ENCODE measurements at regions of chr4 and their contacts with region 1.

Region 1: GRCh38 chr4:145320294-145320693 is 139.9 kb upstream of the OTUD4 start:
- DNase-seq: no peak

Region 2: DNA sequence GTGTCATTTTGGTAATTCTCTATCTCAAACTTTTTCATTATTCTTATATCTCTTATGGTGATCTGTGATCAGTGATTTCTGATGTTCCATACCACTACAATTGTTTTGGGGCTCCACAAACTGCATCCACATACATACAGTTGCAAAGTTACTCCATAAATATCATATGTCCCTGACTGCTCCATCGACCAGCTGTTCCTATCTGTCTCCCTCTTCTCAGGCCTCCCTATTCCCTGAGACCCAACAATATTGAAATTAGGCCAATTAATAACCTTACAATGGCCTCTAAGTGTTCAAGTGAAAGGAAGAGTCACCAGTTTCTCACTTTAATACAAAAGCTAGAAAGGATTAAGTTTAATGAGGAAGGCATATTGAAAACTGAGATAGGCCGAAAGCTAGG is 331.0 kb before region 1 on chr4:
- intact Hi-C with region 1: no loop called
- DNase-seq: no peak

Region 3: DNA sequence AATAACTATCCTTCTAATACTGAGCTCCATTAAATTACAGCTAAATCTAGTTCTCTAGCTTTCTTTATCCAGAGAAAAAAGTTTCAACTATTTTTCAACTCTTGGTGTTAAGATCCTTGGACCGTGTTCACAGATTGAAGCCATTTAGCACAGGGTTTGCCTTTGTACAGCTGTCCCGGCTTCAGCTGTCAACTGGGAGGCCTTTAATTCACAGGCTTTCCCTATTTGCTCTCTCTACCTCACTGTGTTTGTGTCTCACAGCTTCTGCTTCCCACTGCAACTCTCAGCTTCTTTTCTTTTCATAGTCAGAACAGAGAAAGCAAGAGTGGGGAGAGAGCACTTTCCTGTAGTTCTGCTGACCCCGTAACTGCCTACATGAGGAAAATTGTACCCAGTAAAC is 84.5 kb after region 1 on chr4:
- intact Hi-C with region 1: no loop called
- DNase-seq: no peak

Region 4: DNA sequence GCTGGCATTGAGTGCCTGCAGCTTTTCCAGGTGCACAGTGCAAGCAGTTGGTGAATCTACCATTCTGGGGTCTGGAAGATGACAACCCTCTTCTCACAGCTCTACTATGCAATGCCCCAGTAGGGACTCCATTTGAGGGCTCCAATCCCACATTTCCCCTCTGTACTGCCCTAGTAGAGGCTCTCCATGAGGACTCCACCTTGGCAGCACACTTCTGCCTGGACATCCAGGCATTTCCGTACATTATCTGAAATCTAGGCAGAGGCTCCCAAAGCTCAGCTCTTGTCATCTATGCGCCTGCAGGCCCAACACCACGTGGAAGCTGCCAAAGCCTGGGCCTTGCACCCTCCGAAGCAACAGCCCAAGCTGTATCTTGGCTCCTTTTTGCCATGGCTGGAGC is 152.9 kb after region 1 on chr4:
- intact Hi-C with region 1: loop called (anchors 10 kb)
- DNase-seq: no peak

Region 5: DNA sequence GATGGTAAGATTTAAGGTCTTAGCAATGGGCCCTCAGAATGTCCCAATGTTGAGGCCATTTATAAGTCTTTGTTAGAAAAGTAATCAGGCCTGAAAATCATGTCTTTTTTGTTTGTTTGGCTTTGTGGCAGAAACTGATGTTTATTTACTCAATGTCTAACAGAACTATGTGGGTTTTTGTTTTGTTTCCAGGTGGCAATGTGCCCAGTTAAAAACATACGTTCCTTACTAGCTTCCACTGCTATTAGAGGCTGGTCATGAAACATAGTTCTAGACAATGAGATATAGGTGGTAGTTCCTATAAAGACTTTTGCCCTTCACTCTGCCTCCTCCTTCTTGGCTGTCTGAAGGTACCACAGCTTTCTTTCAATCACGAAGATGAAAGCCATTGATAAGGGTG is 468.5 kb after region 1 on chr4:
- intact Hi-C with region 1: no loop called
- DNase-seq: no peak